Calu3 (cell line): ENCODE measurements at regions of chr22 and their contacts with region 1.

Region 1: DNA sequence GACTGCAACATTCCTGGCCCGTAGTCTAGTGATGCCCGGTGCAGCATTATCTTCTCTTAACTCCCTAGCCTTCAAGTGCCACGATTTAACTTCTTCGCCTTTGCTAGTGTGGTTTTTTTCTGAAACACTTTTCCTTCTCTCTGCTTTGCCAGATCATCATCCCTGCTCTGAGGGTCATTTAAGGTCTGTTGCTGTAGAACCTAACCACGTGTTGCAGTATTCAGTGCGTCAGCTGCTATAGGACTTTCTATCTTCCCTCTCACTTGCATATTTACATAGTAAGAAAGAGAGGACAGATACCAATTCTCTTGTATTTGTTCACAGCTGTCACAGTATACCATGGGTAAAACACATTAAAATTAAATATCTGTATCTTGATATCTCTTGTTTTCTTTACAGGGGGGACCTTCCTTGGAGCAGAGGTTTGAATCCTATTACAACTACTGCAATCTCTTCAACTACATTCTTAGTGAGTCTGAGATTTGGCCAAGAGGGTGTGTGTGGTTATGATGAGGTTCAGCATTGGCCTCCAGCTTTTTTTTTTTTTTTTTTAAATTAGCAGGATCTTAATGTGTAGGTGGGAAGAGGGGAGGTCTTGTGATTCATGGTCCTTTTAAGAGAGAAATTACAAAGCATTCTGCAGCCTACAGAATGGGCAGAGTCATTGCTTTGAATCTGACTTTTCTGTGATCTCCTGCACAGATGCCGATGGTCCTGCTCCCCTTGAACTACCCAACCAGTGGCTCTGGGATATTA is 13.5 kb downstream of the EIF3L start:
- DNase-seq: no peak
- H3K4me3 Mint-ChIP-seq: no peak overlapping the region
- H3K27ac Mint-ChIP-seq: no peak overlapping the region
- H3K4me1 Mint-ChIP-seq: no peaks in the 10 kb centered on the region
- H3K27me3 Mint-ChIP-seq: no peaks in the 10 kb centered on the region
- CTCF ChIP-seq: no peak

Region 2: GRCh38 chr22:37282385-37282677 is 580.4 kb before region 1 on chr22 and contains the start of gene CYTH4:
- CTCF ChIA-PET with region 1: no interaction called
- intact Hi-C with region 1: no loop called
- DNase-seq: peak; percentile 70
- H3K4me3 Mint-ChIP-seq: peak within 1 kb of the TSS; percentile 29
- H3K27ac Mint-ChIP-seq: peak within 1 kb of the TSS; percentile 32
- H3K4me1 Mint-ChIP-seq: peaks cover 15% of the 10 kb centered on the region
- H3K27me3 Mint-ChIP-seq: peaks cover 47% of the 10 kb centered on the region
- CTCF ChIP-seq: no peak
- total RNA-seq, gene CYTH4: 0.38 and 0.59 TPM in 2 replicates

Region 3: DNA sequence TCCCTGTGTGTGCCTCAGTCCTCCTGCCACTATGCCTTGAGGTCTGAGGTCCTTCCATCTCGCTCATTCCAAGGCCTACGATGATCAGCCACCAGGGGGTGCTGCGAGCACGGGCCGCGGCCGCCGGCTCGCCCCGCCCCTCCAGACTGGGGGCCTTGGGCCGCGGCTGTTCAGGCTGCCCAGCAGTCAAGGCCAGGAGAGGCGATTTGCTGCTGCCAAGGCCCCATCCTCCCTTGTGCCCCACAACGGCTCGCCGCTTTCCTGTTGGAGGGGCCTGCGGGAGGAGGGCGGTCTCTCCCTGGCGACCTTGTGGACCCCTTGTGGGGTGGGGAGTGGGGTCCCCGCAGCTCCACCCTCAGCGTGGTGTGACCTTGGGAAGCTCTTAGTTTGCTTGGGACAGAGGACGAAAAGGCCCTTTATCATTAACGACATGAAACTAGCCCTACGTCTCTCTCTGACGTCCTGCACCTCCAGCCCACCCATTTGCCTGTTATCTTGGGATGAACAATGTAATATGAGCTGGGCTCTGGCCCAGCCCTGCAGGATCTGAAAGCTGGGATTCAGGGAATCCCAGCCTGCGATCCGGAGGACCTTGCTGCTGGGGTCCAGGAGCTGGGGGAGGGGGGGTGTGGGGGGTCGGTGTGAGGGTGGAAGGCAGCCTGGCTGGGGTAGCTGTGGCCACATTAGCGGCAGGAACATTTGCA is 44.9 kb before region 1 on chr22:
- CTCF ChIA-PET with region 1: interaction called, 16 read pairs
- intact Hi-C with region 1: loop called (anchors 1 kb)
- DNase-seq: peak; percentile 94
- H3K4me3 Mint-ChIP-seq: peak overlapping the region; percentile 56
- H3K27ac Mint-ChIP-seq: no peak overlapping the region
- H3K4me1 Mint-ChIP-seq: peaks cover 9% of the 10 kb centered on the region
- H3K27me3 Mint-ChIP-seq: no peaks in the 10 kb centered on the region
- CTCF ChIP-seq: peak; percentile 88